ENCODE measurements at regions of chr4 and their contacts with region 1.

Region 1: GRCh38 chr4:139656614-139657486 is 8.8 kb upstream of the MGST2 start:
- DNase-seq: peak; percentile 75 to 84 (median 80)
- ATAC-seq: peak; percentile 96
- H3K4me3 ChIP-seq: no peak overlapping the region
- H3K27ac ChIP-seq: no peak overlapping the region
- H3K4me1 ChIP-seq: peaks cover 0 to 3% of the 10 kb centered on the region in 2 experiments; a peak in 2 of 5 replicates
- H3K27me3 ChIP-seq: peaks cover 7 to 18% of the 10 kb centered on the region in 2 experiments; a peak in 4 of 5 replicates
- CTCF ChIP-seq: peak; percentile 81 to 99 (median 96)
- EP300 ChIP-seq: no peak
- POLR2A ChIP-seq: no peak
- RAD21 ChIP-seq: peak; percentile 18 to 73

Region 2: DNA sequence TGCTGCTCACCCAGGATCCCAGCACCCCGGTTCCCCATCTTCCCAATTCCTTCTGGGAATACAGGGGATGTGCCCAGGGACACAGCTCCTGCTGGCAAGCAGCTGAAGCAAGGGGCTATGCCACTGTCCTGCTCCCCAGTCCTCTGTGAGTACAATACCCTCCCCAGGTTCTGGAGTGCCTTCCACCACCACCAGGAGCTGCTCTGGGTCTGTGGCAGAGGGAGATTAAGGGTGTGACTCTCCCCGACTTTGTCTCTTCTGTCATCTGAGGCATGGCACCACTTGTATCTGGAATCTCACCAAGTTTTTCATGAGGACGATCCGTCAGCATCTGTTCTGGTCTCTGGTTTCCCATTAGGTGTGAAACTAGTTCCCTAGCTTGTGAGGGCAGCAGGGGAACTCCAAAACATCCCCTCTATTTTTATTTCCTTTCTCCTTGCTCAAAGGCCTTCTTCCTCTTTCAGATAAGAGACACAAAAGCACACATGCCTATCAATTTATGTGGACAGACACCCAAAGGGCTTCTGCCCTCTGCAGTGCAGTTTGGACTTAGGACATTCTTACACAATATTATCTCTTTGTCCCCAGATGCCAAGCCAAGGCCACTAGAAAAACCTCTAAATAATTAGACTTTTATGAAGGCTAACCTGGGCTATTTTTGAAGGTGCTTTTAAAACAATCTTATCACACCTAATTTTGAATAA is 35.6 kb after region 1 on chr4:
- CTCF ChIA-PET with region 1: no interaction called
- POLR2A ChIA-PET with region 1: no interaction called
- in situ Hi-C with region 1: no loop called
- intact Hi-C with region 1: loop called (anchors 5 kb)
- DNase-seq: peak in 1 of 4 experiments; percentile 25
- ATAC-seq: peak; percentile 86
- H3K4me3 ChIP-seq: no peak overlapping the region
- H3K27ac ChIP-seq: no peak overlapping the region
- H3K4me1 ChIP-seq: peaks cover 6 to 16% of the 10 kb centered on the region in 2 experiments
- H3K27me3 ChIP-seq: no peaks in the 10 kb centered on the region
- CTCF ChIP-seq: peak; percentile 48 to 53 (median 51); a peak in 5 of 6 replicates
- EP300 ChIP-seq: no peak
- POLR2A ChIP-seq: no peak
- RAD21 ChIP-seq: peak in 1 of 2 experiments; percentile 23; a peak in 3 of 4 replicates

Region 3: DNA sequence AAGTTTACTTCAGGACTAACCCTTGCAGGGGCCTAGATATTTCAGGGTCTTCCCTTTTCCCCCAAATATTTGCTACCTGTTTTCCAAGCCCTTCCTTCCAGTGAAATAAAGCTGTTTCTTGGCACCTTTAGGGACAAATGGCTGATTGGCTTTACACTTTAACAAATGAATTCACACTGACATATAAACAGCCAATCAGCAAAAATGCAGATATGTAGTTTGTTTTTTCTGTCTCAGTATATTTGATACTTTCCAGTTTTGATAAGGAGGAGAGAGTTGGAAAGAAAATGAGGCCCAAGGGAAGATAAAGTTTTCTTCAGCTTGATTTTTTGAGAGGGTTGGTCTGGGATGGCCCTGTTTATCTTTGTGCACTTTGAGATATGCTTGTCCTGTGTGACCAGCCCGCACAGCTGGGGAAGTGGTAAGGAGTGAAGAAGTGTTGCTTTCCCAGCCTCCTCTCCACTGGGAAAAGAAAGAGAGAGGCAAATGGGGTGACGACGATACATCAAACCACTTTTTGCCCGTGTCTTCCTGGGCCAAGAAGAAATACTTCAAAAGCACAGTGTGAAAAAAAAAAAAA is 76.2 kb after region 1 on chr4:
- CTCF ChIA-PET with region 1: no interaction called
- POLR2A ChIA-PET with region 1: no interaction called
- in situ Hi-C with region 1: no loop called
- intact Hi-C with region 1: loop called (anchors 2 kb)
- DNase-seq: peak in 2 of 4 experiments; percentile 42 to 48
- ATAC-seq: peak; percentile 79
- H3K4me3 ChIP-seq: no peak overlapping the region
- H3K27ac ChIP-seq: no peak overlapping the region
- H3K4me1 ChIP-seq: peaks cover 0 to 8% of the 10 kb centered on the region in 2 experiments; a peak in 2 of 5 replicates
- H3K27me3 ChIP-seq: peaks cover 0 to 10% of the 10 kb centered on the region in 2 experiments; a peak in 2 of 5 replicates
- CTCF ChIP-seq: no peak
- EP300 ChIP-seq: peak; percentile 20; the same call in 1 of the 2 replicates
- POLR2A ChIP-seq: no peak
- RAD21 ChIP-seq: no peak

Region 4: GRCh38 chr4:139740531-139741041 is 83.7 kb after region 1 on chr4:
- CTCF ChIA-PET with region 1: interaction called, 10 read pairs
- POLR2A ChIA-PET with region 1: no interaction called
- in situ Hi-C with region 1: no loop called
- intact Hi-C with region 1: loop called (anchors 1 kb)
- DNase-seq: peak in 1 of 4 experiments; percentile 28
- ATAC-seq: peak; percentile 86
- H3K4me3 ChIP-seq: no peak overlapping the region
- H3K27ac ChIP-seq: no peak overlapping the region
- H3K4me1 ChIP-seq: no peaks in the 10 kb centered on the region
- H3K27me3 ChIP-seq: peaks cover 7 to 28% of the 10 kb centered on the region in 2 experiments
- CTCF ChIP-seq: peak; percentile 36 to 68 (median 37); a peak in 3 of 6 replicates
- EP300 ChIP-seq: no peak
- POLR2A ChIP-seq: no peak
- RAD21 ChIP-seq: peak; percentile 73 to 77

Region 5: GRCh38 chr4:139768896-139769295 is 112.0 kb after region 1 on chr4:
- CTCF ChIA-PET with region 1: interaction called, 3 read pairs
- POLR2A ChIA-PET with region 1: no interaction called
- in situ Hi-C with region 1: no loop called
- intact Hi-C with region 1: loop called (anchors 1 kb)
- DNase-seq: peak in 3 of 4 experiments; percentile 17 to 34 (median 30)
- ATAC-seq: peak; percentile 85
- H3K4me3 ChIP-seq: no peak overlapping the region
- H3K27ac ChIP-seq: no peak overlapping the region
- H3K4me1 ChIP-seq: no peaks in the 10 kb centered on the region
- H3K27me3 ChIP-seq: peaks cover 14 to 23% of the 10 kb centered on the region in 2 experiments
- CTCF ChIP-seq: peak; percentile 44 to 58 (median 51); a peak in 5 of 6 replicates
- EP300 ChIP-seq: no peak
- POLR2A ChIP-seq: no peak
- RAD21 ChIP-seq: peak in 1 of 2 experiments; percentile 57; a peak in 2 of 4 replicates

Region 6: GRCh38 chr4:140252742-140253555 is 596.1 kb after region 1 on chr4:
- CTCF ChIA-PET with region 1: no interaction called
- POLR2A ChIA-PET with region 1: no interaction called
- in situ Hi-C with region 1: no loop called
- intact Hi-C with region 1: loop called (anchors 1 kb)
- DNase-seq: peak; percentile 50 to 82 (median 77)
- ATAC-seq: peak; percentile 90
- H3K4me3 ChIP-seq: peak overlapping the region; percentile 34
- H3K27ac ChIP-seq: no peak overlapping the region
- H3K4me1 ChIP-seq: peaks cover 0 to 9% of the 10 kb centered on the region in 2 experiments; a peak in 2 of 5 replicates
- H3K27me3 ChIP-seq: peaks cover 0 to 20% of the 10 kb centered on the region in 2 experiments; a peak in 2 of 5 replicates
- CTCF ChIP-seq: peak; percentile 60 to 84 (median 66)
- EP300 ChIP-seq: no peak
- POLR2A ChIP-seq: no peak
- RAD21 ChIP-seq: peak; percentile 46 to 52; a peak in 3 of 4 replicates

Region 7: GRCh38 chr4:140851032-140851636 is 1194.3 kb after region 1 on chr4:
- CTCF ChIA-PET with region 1: no interaction called
- POLR2A ChIA-PET with region 1: no interaction called
- in situ Hi-C with region 1: no loop called
- intact Hi-C with region 1: loop called (anchors 5 kb)
- DNase-seq: peak; percentile 53 to 67 (median 60)
- ATAC-seq: peak; percentile 78
- H3K4me3 ChIP-seq: no peak overlapping the region
- H3K27ac ChIP-seq: no peak overlapping the region
- H3K4me1 ChIP-seq: no peaks in the 10 kb centered on the region
- H3K27me3 ChIP-seq: no peaks in the 10 kb centered on the region
- CTCF ChIP-seq: peak; percentile 63 to 80 (median 71); a peak in 5 of 6 replicates
- EP300 ChIP-seq: no peak
- POLR2A ChIP-seq: no peak
- RAD21 ChIP-seq: peak; percentile 71